PC-3 (cell line): ENCODE measurements at regions of chr16 and their contacts with region 1.

Region 1: GRCh38 chr16:74813109-74813641 is 38.6 kb upstream of the FA2H start:
- DNase-seq: peak; percentile 81
- ATAC-seq: peak; percentile 100
- H3K4me3 ChIP-seq: peak overlapping the region; percentile 26; the same call in 1 of the 2 replicates
- H3K27ac ChIP-seq: no peak overlapping the region
- H3K4me1 ChIP-seq: 0 out of 2 replicates have a peak, but pooled peaks cover 5% of the 10 kb centered on the region
- H3K27me3 ChIP-seq: no peaks in the 10 kb centered on the region
- CTCF ChIP-seq: peak; percentile 89

Region 2: DNA sequence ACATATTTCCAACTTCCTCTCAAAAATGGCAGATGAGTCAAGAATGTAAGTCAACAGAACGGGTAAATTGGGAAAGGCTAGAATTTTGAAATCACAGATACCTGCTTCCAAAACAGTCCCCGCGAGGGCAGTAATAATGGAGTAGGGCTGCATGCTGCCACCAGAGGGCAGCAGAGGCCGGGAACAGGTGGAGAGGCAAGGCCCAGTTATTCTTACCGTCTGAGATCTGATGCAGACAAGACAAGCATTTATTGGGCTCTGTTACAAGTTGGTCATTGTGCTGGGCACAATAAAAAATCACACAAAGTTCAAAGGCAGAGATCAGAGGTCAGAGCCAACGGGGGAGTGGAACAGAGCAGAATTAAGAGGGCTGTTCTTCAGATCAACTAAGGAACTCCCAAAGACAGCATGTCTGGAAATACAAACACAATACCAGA is 103.7 kb before region 1 on chr16:
- CTCF ChIA-PET with region 1: interaction called, 12 read pairs
- POLR2A ChIA-PET with region 1: no interaction called
- intact Hi-C with region 1: loop called (anchors 1 kb)
- DNase-seq: peak; percentile 90
- ATAC-seq: peak; percentile 97
- H3K4me3 ChIP-seq: no peak overlapping the region
- H3K27ac ChIP-seq: no peak overlapping the region; the same call in 1 of the 2 replicates
- H3K4me1 ChIP-seq: peaks cover 3% of the 10 kb centered on the region; the same call in 1 of the 2 replicates
- H3K27me3 ChIP-seq: no peaks in the 10 kb centered on the region
- CTCF ChIP-seq: peak; percentile 93

Region 3: DNA sequence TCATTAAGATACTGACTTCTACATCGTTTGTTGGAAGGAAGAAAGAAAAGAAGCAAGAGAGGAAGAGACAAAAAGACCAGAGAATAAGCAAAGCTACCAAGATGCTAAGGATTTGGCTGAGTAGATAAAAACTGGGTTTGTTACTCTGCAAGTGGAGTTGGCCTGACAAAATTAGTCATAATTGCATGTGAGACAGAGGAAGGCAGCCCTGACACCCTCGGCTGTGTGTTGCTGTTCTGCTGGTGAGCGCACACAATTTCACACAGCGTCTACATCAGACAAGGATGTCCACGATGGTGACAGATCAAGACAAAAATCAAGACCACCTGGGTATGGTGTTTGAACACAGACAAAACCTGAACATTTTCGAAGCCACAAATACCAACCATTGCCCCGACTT is 36.9 kb after region 1 on chr16:
- CTCF ChIA-PET with region 1: no interaction called
- POLR2A ChIA-PET with region 1: no interaction called
- intact Hi-C with region 1: loop called (anchors 2 kb)
- DNase-seq: no peak
- ATAC-seq: no peak
- H3K4me3 ChIP-seq: no peak overlapping the region
- H3K27ac ChIP-seq: no peak overlapping the region
- H3K4me1 ChIP-seq: no peaks in the 10 kb centered on the region
- H3K27me3 ChIP-seq: no peaks in the 10 kb centered on the region
- CTCF ChIP-seq: no peak

Region 4: DNA sequence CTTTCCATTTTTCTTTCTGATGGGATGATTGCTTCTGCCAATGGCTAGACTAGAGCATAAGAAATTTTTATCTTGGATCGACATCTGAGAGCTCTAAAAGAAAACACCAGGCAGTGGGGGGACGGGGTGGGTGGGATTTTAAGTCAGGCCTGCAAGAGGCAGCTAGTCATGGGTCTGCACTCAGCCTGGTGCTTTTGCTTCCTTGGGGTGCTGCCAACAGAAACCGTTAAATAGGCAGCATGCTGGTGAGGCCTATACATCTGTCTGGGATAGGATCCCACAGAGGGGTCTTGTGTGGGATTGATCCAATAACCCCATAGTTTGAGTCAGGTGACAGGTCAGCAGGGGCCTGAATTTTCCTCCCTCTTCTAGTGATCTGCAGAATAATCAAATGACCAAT is 212.6 kb after region 1 on chr16:
- CTCF ChIA-PET with region 1: no interaction called
- POLR2A ChIA-PET with region 1: no interaction called
- intact Hi-C with region 1: no loop called
- DNase-seq: no peak
- ATAC-seq: no peak
- H3K4me3 ChIP-seq: no peak overlapping the region
- H3K27ac ChIP-seq: no peak overlapping the region
- H3K4me1 ChIP-seq: peaks cover 24% of the 10 kb centered on the region
- H3K27me3 ChIP-seq: no peaks in the 10 kb centered on the region
- CTCF ChIP-seq: no peak